ENCODE measurements at regions of chr12 and their contacts with region 1.

Region 1: GRCh38 chr12:9750276-9751203 is 10.2 kb downstream of the CD69 start:
- DNase-seq: peak; percentile 67
- H3K4me3 ChIP-seq: peak overlapping the region in 1 of 2 experiments; percentile 34; a peak in 1 of 4 replicates
- H3K27ac ChIP-seq: no peak overlapping the region
- H3K4me1 ChIP-seq: no peaks in the 10 kb centered on the region; a peak in 1 of 4 replicates
- H3K27me3 ChIP-seq: peaks cover 21% of the 10 kb centered on the region
- CTCF ChIP-seq: peak; percentile 83
- EP300 ChIP-seq: no peak
- RAD21 ChIP-seq: peak; percentile 61

Region 2: GRCh38 chr12:9721394-9722092 is 29.0 kb before region 1 on chr12:
- CTCF ChIA-PET with region 1: interaction called, 10 read pairs
- POLR2A ChIA-PET with region 1: no interaction called
- DNase-seq: no peak
- H3K4me3 ChIP-seq: no peak overlapping the region
- H3K27ac ChIP-seq: no peak overlapping the region
- H3K4me1 ChIP-seq: no peaks in the 10 kb centered on the region
- H3K27me3 ChIP-seq: peaks cover 13% of the 10 kb centered on the region; the same call in 1 of the 2 replicates
- CTCF ChIP-seq: no peak
- EP300 ChIP-seq: no peak
- RAD21 ChIP-seq: no peak

Region 3: DNA sequence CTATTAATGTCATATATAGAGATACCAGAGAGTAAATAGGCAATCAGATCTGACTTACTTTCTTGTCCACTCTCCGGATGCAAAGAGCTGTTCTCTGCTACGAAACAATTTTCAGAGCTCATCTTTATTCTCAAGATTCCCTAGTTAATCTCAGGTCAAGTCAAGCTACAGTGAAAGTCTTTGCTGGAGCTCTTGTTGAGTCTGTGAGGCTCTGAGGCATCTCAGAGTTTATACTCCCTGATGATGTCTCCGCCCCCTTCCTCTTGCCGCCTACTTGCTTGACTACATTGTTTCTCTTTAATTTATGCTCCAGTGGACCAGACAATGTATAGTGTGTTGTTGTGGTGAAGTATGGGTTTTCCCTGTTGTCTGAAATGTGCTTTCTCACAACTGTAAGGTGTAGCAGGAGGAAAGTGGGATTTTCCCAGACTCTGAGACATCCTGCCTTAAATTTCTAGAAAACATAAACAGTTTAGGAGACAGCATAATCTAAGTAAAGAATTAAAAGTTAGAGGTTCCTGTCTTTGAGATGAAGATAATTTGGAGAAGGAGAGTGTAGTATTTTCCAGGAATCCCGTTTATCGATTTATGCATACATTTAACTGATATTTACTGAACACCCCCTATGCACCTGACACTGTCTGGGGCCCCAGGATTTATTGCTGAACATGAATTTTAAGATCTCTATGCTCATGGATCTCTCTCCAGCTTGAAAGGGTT is 10.3 kb after region 1 on chr12 and contains the start of gene CD69:
- CTCF ChIA-PET with region 1: interaction called, 51 read pairs
- POLR2A ChIA-PET with region 1: no interaction called
- DNase-seq: no peak
- H3K4me3 ChIP-seq: no peak within 1 kb of the TSS
- H3K27ac ChIP-seq: no peak within 1 kb of the TSS
- H3K4me1 ChIP-seq: no peaks in the 10 kb centered on the region
- H3K27me3 ChIP-seq: peaks cover 9% of the 10 kb centered on the region; the same call in 1 of the 2 replicates
- CTCF ChIP-seq: no peak
- EP300 ChIP-seq: no peak
- RAD21 ChIP-seq: no peak
- polyA plus RNA-seq, gene CD69: not detected in 2 replicates

Region 4: GRCh38 chr12:9773216-9773877 is 22.8 kb after region 1 on chr12:
- CTCF ChIA-PET with region 1: interaction called, 23 read pairs
- POLR2A ChIA-PET with region 1: no interaction called
- DNase-seq: no peak
- H3K4me3 ChIP-seq: no peak overlapping the region
- H3K27ac ChIP-seq: no peak overlapping the region
- H3K4me1 ChIP-seq: no peaks in the 10 kb centered on the region
- H3K27me3 ChIP-seq: no peaks in the 10 kb centered on the region; the same call in 1 of the 2 replicates
- CTCF ChIP-seq: no peak
- EP300 ChIP-seq: no peak
- RAD21 ChIP-seq: no peak

Region 5: GRCh38 chr12:10140001-10140400 is 389.5 kb after region 1 on chr12:
- CTCF ChIA-PET with region 1: interaction called, 23 read pairs
- POLR2A ChIA-PET with region 1: no interaction called
- DNase-seq: peak; percentile 10
- H3K4me3 ChIP-seq: no peak overlapping the region
- H3K27ac ChIP-seq: no peak overlapping the region
- H3K4me1 ChIP-seq: no peaks in the 10 kb centered on the region
- H3K27me3 ChIP-seq: peaks cover 18% of the 10 kb centered on the region; the same call in 1 of the 2 replicates
- CTCF ChIP-seq: peak; percentile 49
- EP300 ChIP-seq: no peak
- RAD21 ChIP-seq: peak; percentile 67